ENCODE measurements at regions of chr6 and their contacts with region 1.

Region 1: GRCh38 chr6:26216356-26216885 is 129.2 kb downstream of the HFE start:
- DNase-seq: peak; percentile 98
- H3K4me3 ChIP-seq: peak overlapping the region; percentile 67
- CTCF ChIP-seq: no peak

Region 2: GRCh38 chr6:26156076-26156849 is 60.2 kb before region 1 on chr6:
- CTCF ChIA-PET with region 1: no interaction called
- POLR2A ChIA-PET with region 1: interaction called, 37 read pairs
- DNase-seq: peak; percentile 28
- H3K4me3 ChIP-seq: peak overlapping the region; percentile 68
- CTCF ChIP-seq: no peak

Region 3: DNA sequence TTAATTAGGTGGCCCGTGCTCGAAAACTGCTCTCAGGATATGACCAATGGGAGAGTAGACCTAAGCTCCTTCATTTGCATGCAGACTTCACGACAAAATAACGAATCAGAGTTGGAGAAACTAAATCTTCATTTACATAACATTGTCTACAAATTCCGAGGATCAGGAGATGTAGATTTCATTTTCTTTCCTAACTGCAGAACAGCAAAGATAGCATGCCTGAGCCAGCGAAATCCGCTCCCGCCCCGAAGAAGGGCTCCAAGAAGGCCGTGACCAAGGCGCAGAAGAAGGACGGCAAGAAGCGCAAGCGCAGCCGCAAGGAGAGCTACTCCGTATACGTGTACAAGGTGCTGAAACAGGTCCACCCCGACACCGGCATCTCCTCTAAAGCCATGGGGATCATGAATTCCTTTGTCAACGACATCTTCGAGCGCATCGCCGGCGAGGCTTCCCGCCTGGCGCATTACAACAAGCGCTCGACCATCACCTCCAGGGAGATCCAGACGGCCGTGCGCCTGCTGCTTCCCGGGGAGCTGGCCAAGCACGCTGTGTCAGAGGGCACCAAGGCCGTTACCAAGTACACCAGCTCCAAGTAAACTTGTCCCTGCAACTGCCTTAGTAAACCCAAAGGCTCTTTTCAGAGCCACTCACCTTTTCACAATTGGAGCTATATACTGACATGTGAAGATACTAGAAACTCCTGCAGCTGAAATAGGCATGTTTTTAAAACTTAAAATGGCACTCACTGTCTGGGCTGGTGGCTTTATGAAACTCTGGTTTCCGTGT is 32.6 kb before region 1 on chr6:
- CTCF ChIA-PET with region 1: interaction called, 6 read pairs
- POLR2A ChIA-PET with region 1: interaction called, 23 read pairs
- DNase-seq: no peak
- H3K4me3 ChIP-seq: peak overlapping the region; percentile 57
- CTCF ChIP-seq: no peak

Region 4: DNA sequence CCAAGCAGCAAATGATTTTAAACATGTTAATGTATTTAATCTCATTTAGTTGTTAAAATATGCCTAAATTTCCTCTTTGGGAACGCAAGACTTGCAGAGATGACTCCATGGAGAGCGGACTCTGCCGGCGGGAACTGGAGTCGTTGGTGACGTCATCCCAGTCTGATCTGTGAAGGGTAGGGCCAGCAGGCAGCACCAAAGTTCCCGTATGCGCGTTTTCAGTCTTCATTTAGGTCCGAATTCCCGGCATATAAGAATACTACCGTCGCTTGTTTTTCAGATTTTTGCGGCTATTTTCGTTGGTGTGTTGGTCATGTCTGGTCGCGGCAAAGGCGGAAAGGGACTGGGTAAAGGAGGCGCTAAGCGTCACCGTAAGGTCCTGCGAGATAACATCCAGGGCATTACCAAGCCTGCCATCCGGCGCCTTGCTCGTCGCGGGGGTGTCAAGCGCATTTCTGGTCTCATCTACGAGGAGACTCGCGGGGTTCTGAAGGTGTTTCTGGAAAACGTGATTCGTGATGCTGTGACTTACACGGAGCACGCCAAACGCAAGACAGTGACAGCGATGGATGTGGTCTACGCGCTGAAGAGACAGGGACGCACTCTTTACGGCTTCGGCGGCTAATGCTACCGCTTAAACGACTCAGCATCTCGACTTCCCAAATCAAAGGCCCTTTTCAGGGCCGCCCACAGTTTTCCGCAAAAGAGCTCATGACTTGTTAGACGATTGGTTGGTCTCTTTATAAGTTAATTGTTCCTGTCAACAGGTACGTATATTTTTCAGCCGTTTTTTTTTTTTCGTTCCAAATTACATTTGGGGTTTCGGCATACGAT is 11.9 kb before region 1 on chr6:
- CTCF ChIA-PET with region 1: interaction called, 10 read pairs
- POLR2A ChIA-PET with region 1: interaction called, 139 read pairs
- DNase-seq: no peak
- H3K4me3 ChIP-seq: peak overlapping the region; percentile 82
- CTCF ChIP-seq: peak; percentile 44

Region 5: DNA sequence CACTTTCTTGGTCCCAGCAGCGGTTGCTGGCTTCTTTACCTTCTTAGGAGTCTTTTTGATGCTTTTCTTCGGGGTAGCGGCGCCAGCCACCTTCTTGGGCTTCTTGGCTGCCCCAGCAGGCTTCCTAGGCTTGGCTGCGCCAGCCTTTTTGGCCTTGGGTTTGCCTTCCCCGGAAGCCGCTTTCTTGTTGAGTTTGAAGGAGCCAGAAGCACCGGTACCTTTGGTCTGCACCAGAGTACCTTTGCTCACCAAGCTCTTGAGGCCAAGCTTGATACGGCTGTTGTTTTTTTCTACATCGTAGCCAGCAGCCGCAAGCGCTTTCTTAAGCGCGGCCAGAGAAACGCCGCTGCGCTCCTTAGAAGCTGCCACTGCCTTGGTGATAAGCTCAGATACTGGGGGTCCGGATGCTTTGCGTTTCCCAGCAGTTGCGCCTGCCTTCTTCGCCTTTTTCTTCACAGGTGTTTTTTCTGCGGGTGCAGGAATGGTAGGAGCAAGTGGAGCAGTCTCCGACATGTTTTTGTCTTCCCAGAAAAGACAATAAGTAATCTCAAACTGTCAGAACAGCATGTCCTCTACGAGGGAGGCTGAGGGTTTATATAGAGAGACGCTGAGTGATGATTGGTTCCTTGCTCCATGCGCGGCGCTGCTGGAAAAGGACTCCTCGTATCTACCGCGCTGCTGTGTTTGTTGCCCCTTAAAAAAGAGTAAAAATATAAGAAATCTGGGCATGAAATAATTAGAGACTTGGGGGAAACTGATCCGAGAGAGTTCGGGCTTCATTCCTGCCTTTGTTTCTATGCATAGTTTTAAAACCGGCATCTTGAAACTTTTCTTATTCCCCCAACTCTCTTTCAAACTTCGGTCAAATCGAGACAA is 18.2 kb after region 1 on chr6:
- CTCF ChIA-PET with region 1: interaction called, 3 read pairs
- POLR2A ChIA-PET with region 1: interaction called, 19 read pairs
- DNase-seq: no peak
- H3K4me3 ChIP-seq: peak overlapping the region; percentile 60
- CTCF ChIP-seq: no peak

Region 6: GRCh38 chr6:26249957-26250697 is 33.7 kb after region 1 on chr6:
- CTCF ChIA-PET with region 1: no interaction called
- POLR2A ChIA-PET with region 1: interaction called, 29 read pairs
- DNase-seq: no peak
- H3K4me3 ChIP-seq: peak overlapping the region; percentile 68
- CTCF ChIP-seq: peak; percentile 45

Region 7: DNA sequence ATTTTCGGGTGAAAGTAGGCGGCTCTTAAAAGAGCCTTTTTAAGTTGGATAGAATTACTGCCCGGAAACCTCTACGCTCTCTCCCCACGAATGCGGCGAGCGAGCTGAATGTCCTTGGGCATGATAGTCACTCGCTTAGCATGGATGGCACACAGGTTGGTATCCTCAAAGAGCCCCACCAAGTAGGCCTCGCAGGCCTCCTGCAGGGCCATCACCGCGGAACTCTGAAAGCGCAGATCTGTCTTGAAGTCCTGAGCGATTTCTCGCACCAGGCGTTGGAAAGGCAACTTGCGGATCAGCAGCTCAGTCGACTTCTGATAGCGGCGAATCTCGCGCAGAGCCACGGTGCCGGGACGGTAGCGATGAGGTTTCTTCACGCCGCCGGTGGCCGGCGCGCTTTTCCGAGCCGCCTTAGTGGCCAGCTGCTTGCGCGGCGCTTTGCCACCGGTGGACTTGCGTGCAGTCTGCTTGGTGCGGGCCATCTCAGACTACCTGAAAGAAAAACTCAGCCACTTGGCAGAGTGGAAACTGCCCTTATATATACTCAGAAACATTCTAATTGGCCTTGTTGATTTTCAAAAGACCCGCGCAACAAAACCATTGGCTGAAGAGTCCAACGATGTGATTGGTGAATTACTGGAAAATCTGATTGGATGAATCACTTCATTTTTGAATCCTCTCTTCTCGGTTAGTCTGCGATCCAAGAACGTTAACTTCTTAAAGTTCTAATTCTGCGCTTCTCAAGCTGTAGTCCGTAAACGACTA is 54.7 kb after region 1 on chr6:
- CTCF ChIA-PET with region 1: no interaction called
- POLR2A ChIA-PET with region 1: interaction called, 43 read pairs
- DNase-seq: no peak
- H3K4me3 ChIP-seq: peak overlapping the region; percentile 63
- CTCF ChIP-seq: no peak

Region 8: GRCh38 chr6:26302941-26303559 is 86.6 kb after region 1 on chr6:
- CTCF ChIA-PET with region 1: no interaction called
- POLR2A ChIA-PET with region 1: no interaction called
- DNase-seq: no peak
- H3K4me3 ChIP-seq: no peak overlapping the region
- CTCF ChIP-seq: no peak

Measured in AG04449 (cell line).